ENCODE measurements at regions of chr1 and their contacts with region 1.

Region 1: DNA sequence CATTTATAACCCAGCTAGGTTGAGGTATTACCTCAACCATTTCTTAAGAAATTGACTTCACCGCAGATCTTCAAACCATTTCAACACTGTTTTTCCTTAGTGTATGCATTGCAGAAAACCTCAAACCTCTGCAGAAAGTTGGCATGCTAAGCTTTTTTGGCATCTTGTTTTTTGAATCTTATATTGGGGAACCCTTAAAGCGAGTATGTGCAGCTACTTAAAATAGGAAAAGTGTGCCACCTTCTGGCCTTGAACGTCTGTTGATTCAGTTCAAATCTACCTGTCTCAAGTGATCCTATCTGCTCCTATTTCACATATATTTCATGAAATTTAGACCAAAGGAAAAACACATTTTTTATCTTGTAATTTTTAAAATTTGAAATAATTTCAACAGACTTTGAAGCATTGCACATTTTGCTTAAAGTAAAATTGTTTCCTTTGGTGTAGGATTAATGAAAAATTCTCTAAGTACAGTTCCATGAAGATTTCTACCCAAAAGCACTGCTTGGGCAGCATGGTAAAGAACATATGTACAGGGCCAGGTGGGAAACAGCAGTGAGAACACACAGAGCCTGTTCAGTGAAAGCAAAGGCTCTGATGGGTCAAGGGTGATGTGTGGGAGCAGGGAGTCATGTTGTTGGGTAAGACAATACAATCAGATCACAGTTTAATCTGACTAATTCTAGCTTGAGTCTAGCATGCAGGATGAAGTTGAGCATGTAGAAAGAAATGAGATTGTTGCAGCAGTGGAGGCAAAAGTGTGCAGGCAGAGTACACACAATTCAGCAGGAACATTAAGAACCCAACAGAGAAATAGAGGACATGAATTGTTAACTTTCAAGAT is 17.2 kb downstream of the HENMT1 start:
- DNase-seq: peak in 9 of 10 donors; percentile 31 to 80 (median 60)
- ATAC-seq: peak; percentile 17 to 24
- H3K4me3 Mint-ChIP-seq: peak overlapping the region in 8 of 10 donors; percentile 12 to 84 (median 48)
- H3K27ac Mint-ChIP-seq: peak overlapping the region; percentile 34 to 100 (median 99)
- H3K4me1 Mint-ChIP-seq: peaks cover 48 to 83% (median 80%) of the 10 kb centered on the region in 4 donors
- H3K27me3 Mint-ChIP-seq: no peaks in the 10 kb centered on the region

Region 2: GRCh38 chr1:108512239-108512981 is 131.3 kb before region 1 on chr1:
- POLR2A ChIA-PET with region 1: interaction called, 15 read pairs
- DNase-seq: peak in 3 of 10 donors; percentile 55 to 66 (median 55)
- ATAC-seq: peak; percentile 61 to 65
- H3K4me3 Mint-ChIP-seq: no peak overlapping the region
- H3K27ac Mint-ChIP-seq: no peak overlapping the region
- H3K4me1 Mint-ChIP-seq: no peaks in the 10 kb centered on the region
- H3K27me3 Mint-ChIP-seq: peaks cover 11 to 18% (median 15%) of the 10 kb centered on the region in 5 donors

Region 3: DNA sequence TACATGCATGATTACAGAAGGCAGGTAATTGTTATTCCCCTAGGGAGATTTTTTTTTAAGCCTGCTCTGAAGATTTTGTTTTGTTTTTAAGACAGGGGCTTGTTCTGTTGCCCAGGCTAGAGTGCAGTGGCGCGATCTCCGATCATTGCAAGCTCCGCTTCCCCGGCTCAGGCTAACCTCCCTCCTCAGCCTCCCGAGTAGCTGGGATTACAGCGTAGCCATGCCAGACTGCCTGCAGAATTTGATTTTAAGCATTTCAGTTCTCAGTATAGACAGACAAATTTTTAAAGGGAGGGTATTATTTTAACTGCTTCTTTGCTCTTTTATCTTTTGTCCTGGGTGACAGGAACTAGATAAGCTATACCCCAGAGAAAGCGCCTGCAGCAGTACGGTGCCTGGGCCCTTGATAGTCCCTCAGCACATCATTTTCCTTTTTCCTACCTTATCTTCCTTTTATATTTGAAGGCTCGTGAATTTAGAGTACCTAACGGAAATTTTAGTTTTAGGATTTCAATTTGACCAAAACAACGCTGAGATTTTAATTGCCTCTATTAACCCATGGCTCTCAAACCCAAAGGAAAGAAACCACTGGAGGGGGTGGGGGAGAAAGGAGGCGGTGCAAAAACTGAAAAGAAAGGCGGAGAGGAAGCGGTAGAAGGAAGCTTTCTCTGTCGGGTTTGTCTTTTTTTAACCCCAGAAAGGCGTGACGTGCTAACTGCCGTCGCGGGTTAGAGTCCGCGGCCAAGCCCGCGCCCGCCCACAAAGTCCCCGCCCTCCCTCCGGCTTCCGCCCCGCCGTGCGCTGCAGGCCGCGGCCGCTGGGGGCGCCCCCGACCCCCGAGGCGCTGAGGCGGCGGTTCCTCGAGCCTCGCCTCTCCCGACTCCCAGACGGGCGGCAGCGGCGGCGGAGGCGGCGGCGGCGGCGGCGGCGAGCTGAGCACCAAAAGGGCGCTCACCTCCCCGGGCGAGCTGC is 84.2 kb before region 1 on chr1 and contains the start of gene EEIG2:
- POLR2A ChIA-PET with region 1: interaction called, 82 read pairs
- DNase-seq: peak; percentile 85 to 93 (median 90)
- ATAC-seq: peak; percentile 83 to 88
- H3K4me3 Mint-ChIP-seq: peak within 1 kb of the TSS; percentile 92 to 98 (median 97)
- H3K27ac Mint-ChIP-seq: peak within 1 kb of the TSS; percentile 87 to 96 (median 93)
- H3K4me1 Mint-ChIP-seq: peaks cover 15 to 42% (median 35%) of the 10 kb centered on the region in 4 donors
- H3K27me3 Mint-ChIP-seq: peaks cover 0 to 2% (median 0%) of the 10 kb centered on the region in 5 donors
- polyA plus RNA-seq, gene EEIG2: 0.48 to 2.4 (median 0.75) TPM

Measured in naive thymus-derived CD8-positive, alpha-beta T cell (primary cell).